Activated T-helper 1 cell treated with anti-CD3 and anti-CD28 coated beads, Interleukin-12 subunit alpha, Interleukin-12 subunit beta, Interleukin-2, Interleukin-4 antibody, amounts not matched to agents 30 ng/mL and 10 ng/mL and 1 ng/mL, durations not matched to agents 14 hours and 24 hours and 36 hours (primary cell): ENCODE measurements at regions of chr5 and their contacts with region 1.

Region 1: DNA sequence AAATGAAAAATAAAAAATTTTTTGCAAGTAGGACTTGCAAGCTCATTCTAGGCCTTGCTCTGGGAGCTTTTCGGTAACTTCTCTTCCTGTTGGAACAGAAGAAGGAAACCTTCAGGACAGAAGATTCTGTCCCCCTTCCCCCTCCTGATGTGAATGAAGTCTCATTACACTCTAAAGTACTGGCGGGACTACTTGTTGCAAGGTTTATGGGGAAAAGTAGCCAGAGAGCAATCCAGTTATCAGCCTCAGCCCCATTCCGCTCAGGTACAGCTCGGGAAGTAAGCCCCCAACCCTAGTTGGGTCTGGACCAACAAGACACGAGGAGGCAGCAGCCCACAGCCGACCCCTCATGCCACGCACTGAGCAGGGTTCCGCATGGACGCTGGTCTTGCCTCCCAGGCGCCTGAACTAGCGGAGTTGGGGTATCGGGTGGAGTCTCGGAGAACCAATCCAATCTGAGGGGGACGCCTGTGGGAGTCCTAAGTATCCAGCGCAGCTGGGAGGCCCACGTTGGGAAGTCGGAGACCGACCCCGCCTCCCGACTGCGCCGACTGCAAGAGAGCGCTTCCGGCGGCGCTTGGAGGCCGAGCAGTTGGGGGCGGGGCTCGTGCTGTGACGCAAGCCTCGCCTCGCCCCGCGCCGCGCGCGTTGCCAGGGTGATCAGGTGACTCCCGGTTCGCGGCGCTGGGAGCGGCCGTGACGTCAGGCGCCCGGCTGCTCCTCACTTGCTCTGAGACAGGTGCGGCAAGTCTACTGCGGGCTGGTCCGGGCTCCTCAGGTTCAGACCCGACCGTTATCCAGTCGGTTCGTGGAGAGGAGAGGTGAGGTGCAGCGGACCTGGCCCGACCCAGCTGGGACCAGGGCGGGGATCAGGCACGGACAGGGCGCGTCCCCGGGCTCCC is at the start of gene CYSTM1:
- DNase-seq: peak; percentile 95
- H3K4me3 Mint-ChIP-seq: peak within 1 kb of the TSS; percentile 94
- H3K27ac Mint-ChIP-seq: peak within 1 kb of the TSS; percentile 92
- H3K4me1 Mint-ChIP-seq: peaks cover 18% of the 10 kb centered on the region
- H3K27me3 Mint-ChIP-seq: peaks cover 19% of the 10 kb centered on the region
- total RNA-seq, gene CYSTM1: 16.6 and 17.2 TPM in 2 replicates

Region 2: DNA sequence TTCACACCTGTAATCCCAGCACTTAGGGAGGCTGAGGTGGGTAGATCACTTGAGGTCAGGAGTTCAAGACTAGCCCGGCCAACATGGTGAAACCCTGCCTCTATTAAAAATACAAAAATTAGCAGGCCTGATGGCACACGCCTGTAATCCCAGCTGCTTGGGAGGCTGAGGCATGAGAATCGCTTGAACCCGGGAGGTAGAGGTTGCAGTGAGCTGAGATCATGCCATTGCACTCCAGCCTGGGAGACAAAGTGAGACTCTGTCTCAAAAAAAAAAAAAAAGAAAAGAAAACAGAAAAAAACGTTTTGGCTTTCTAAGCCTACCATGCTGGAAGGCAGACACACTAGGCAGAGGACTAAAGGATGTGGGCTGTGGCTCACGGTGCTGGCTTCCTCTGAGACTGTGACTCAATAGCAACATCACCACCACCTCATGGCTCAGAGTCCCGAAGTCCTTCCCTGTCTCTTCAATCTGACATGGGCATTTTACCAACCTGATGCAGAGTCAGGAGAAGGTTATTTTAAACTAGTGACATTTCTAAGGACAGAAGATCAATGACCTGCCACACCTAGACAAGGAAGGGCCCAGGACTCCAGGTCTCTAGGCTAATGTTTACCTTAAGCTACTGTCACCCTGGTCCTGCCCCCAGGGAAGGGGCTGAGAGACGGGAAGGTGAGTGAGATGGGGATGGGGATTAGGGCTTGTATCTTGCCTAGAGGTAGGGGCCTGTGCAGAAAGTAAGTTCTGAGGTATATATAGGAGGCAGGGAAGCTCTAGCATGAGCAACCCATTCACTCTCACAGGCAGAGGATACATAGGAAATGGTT is 715.9 kb before region 1 on chr5:
- intact Hi-C with region 1: no loop called
- DNase-seq: peak; percentile 80
- H3K4me3 Mint-ChIP-seq: peak overlapping the region; percentile 81
- H3K27ac Mint-ChIP-seq: peak overlapping the region; percentile 99
- H3K4me1 Mint-ChIP-seq: peaks cover 72% of the 10 kb centered on the region
- H3K27me3 Mint-ChIP-seq: no peaks in the 10 kb centered on the region

Region 3: DNA sequence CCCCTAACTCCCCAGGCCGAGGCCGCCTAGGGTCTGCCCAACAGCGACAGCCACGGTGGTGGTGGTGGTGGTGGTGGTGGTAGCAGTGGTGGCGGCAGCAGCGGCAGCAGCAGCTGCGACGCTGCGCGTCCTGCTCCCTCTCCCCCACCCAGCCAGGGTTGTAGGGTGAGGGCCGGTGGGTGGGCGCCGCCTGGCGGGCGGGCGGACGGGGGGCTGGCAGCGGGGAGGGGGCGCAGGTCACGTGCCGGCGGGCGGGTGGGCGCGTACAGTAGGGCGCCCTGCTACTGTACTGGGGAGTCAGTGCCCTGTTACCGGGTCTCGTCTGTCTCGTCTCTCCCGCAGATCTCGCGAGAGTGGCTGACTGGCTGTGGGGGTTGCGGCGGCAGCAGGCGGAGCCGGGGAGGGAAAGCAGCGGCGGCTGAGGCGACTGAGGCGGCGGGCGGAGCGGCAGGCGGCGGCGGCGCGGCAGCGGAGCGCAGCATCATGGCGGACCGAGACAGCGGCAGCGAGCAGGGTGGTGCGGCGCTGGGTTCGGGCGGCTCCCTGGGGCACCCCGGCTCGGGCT is 60.9 kb before region 1 on chr5 and contains the start of gene PURA:
- intact Hi-C with region 1: loop called (anchors 2 kb)
- DNase-seq: peak; percentile 94
- H3K4me3 Mint-ChIP-seq: peak within 1 kb of the TSS; percentile 94
- H3K27ac Mint-ChIP-seq: peak within 1 kb of the TSS; percentile 96
- H3K4me1 Mint-ChIP-seq: peaks cover 60% of the 10 kb centered on the region
- H3K27me3 Mint-ChIP-seq: peaks cover 40% of the 10 kb centered on the region
- total RNA-seq, gene PURA: 10.6 and 12.2 TPM in 2 replicates

Region 4: DNA sequence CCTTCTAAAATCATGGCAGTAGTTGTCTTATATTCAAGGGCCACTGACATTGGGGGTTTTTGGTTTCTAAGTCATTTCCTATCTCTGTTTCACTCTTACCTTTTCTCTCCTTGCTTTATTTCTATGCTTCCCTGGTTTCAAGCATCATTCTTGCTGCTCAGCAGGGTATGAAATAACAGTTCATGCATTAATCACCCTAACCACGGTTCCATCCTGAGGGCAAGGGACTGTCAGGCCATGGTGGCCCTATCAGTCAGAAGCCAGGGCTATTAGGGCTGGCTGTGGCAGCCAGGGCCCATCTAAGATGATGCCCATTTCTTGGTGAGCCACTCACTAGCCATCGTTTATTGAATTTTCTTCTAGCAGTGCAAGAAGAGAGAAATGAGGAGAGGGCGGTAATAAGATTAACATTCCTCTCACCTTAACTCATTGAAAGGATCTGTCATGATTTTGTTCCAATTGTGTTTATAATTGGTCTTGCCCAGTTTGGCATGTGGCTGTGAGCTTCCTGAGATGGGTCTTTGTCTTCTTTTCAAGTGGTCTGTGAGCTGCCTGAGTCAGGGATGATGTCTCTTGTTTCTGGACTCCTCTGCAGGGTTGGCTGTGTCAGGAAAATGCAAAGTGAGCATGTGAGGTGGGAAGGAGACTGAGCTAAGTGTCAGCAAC is 45.4 kb after region 1 on chr5:
- intact Hi-C with region 1: loop called (anchors 5 kb)
- DNase-seq: no peak
- H3K4me3 Mint-ChIP-seq: no peak overlapping the region
- H3K27ac Mint-ChIP-seq: peak overlapping the region; percentile 42
- H3K4me1 Mint-ChIP-seq: peaks cover 34% of the 10 kb centered on the region
- H3K27me3 Mint-ChIP-seq: no peaks in the 10 kb centered on the region

Region 5: DNA sequence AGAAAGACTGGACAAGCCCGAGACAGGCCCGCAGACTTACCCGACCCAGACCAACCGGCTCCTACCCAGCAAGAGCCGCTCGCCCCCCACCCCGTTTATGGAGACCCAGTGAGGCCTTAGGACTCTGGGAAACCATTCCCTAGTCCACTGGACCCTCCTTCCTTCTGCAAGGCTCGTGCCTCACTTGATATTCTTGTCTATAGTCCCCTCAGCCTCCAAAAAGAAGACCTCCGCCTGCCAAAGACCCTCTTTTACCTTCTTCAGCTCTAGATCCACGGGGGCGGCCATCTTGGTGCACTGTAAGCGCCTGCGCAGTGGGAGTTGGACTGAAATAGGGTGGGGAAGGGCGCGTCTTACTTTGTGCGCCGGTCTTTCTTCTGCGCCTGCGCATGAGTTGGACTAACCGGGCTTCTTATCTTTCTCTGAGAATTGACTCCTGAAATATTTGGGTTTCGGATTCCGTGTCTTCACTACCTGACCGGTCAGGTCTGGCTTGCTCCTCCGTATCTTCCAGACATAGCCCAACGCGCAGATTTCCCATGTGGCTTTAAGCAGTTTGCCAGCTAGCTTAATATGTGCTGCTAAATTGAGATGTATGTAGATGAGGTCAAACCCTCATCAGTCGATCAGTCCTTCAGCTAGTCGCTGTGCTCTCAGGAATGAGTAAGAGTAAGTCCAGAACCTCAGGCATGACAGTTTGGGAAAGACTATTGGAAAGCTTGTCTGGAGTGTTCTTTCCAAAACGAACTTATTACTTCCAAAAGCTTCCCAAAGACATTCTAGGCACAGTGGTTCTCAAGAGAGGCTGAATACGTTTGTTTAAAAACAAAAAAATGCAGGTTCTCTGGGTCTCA is 128.3 kb after region 1 on chr5 and contains the start of gene PFDN1:
- intact Hi-C with region 1: loop called (anchors 1 kb)
- DNase-seq: peak; percentile 90
- H3K4me3 Mint-ChIP-seq: peak within 1 kb of the TSS; percentile 93
- H3K27ac Mint-ChIP-seq: peak within 1 kb of the TSS; percentile 93
- H3K4me1 Mint-ChIP-seq: peaks cover 38% of the 10 kb centered on the region
- H3K27me3 Mint-ChIP-seq: no peaks in the 10 kb centered on the region
- total RNA-seq, gene PFDN1: 59.5 and 60.6 TPM in 2 replicates

Region 6: DNA sequence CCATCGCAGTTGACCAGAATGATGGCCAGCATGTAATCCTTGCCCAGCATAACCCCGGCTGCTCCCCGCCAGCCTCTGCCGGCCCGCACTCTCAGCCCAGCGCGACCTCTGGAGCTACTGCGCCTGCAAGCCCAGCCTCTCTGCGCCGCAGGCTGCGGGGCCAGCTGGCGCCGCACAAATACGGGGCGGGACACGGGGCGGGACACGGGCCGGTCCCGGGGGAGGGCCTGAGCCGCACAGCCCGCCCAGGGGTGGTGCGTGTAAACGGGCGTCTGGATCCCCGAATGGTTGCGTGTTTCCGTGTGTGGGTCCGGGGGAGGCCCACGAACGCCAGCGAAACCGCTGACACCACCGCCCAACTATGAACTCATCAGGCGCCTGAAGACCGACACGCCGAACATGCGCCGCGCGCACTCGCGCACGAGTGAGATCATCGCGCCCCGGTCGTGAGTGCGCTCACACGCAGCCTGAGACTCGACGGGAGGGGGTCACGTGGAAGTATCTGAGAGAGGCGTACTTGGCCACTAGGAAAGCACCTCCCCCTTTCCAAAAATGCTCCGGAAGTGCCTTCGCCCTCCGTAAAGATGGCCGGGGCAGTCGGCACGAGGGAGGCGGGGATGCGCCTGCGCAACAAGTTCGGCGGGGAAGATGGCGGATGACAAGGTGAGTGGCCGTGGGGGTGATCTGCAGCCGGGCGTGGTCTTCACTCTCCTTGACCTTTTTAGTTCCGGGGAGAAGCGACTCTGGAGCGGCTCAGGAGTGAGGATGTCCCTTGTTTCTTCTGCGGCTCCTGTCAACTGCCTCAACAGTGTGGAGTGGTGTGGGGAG is 389.7 kb after region 1 on chr5 and contains the starts of genes APBB3 and SLC35A4:
- intact Hi-C with region 1: loop called (anchors 1 kb)
- DNase-seq: peak; percentile 98
- H3K4me3 Mint-ChIP-seq: peak within 1 kb of the TSS; percentile 95
- H3K27ac Mint-ChIP-seq: peak within 1 kb of the TSS; percentile 96
- H3K4me1 Mint-ChIP-seq: peaks cover 54% of the 10 kb centered on the region
- H3K27me3 Mint-ChIP-seq: no peaks in the 10 kb centered on the region
- total RNA-seq, gene APBB3: 17.2 and 21.2 TPM in 2 replicates
- total RNA-seq, gene SLC35A4: 94.3 and 107 TPM in 2 replicates

Region 7: GRCh38 chr5:140690941-140691924 is 516.5 kb after region 1 on chr5 and contains the starts of genes HARS1 and HARS2:
- intact Hi-C with region 1: loop called (anchors 1 kb)
- DNase-seq: peak; percentile 81
- H3K4me3 Mint-ChIP-seq: peak within 1 kb of the TSS; percentile 100
- H3K27ac Mint-ChIP-seq: peak within 1 kb of the TSS; percentile 95
- H3K4me1 Mint-ChIP-seq: peaks cover 50% of the 10 kb centered on the region
- H3K27me3 Mint-ChIP-seq: no peaks in the 10 kb centered on the region
- total RNA-seq, gene HARS1: 112 and 114 TPM in 2 replicates
- total RNA-seq, gene HARS2: 31.2 and 32.7 TPM in 2 replicates

Region 8: GRCh38 chr5:141636413-141637122 is 1461.9 kb after region 1 on chr5 and contains the starts of genes HDAC3 and RELL2:
- intact Hi-C with region 1: loop called (anchors 5 kb)
- DNase-seq: peak; percentile 92
- H3K4me3 Mint-ChIP-seq: peak within 1 kb of the TSS; percentile 93
- H3K27ac Mint-ChIP-seq: peak within 1 kb of the TSS; percentile 80
- H3K4me1 Mint-ChIP-seq: peaks cover 53% of the 10 kb centered on the region
- H3K27me3 Mint-ChIP-seq: no peaks in the 10 kb centered on the region
- total RNA-seq, gene HDAC3: 83.1 and 87.2 TPM in 2 replicates
- total RNA-seq, gene RELL2: 19.3 and 19.5 TPM in 2 replicates